Posterior vena cava (tissue), 2 donors: ENCODE measurements at regions of chr1 and their contacts with region 1.

Region 1: GRCh38 chr1:90340606-90341005 is 345.7 kb downstream of the ZNF326 start:
- DNase-seq: no peak

Region 2: DNA sequence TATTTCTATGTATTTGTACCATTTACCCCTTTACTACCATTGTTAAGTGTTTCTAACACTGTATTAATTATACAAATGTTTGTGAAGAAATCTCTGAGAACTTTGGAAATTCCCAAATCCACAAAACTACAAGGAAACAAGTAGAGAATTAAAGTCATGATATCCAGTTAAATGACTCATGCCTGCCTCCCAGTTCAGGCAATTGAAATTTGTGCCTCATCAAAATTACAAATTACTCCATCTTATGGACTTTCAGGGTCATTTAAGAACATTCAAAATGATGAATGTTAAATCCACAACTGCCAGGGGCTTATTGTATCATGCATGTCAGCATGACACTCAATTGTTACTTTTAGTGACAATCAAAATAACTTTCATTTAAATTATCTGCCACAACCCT is 63.3 kb before region 1 on chr1:
- intact Hi-C with region 1: loop called in 1 of 2 experiments (anchors 2 kb)
- DNase-seq: no peak

Region 3: DNA sequence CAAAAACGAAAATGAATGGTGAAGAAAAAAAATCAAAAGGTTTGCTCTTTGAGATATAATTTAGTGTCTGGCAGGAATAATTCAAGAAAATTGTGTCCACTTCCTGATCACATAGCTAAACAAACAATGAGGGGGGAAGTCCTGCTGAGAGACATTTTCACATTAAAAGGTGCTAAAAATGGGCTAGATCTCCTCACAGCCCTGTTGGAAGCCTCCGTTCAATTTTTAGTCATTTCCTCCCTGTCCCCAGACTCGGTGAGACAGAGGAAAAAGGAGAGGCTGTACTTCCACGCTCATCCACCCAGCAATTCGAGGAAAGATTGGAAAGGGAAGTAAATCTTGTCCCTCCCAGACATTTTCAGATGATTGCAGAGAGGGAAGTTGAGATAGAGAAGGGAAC is 272.8 kb after region 1 on chr1:
- intact Hi-C with region 1: no loop called
- DNase-seq: no peak